Activated T-helper 1 cell treated with anti-CD3 and anti-CD28 coated beads, Interleukin-12 subunit alpha, Interleukin-12 subunit beta, Interleukin-2, Interleukin-4 antibody, amounts not matched to agents 30 ng/mL and 10 ng/mL and 1 ng/mL, durations not matched to agents 14 hours and 24 hours and 36 hours (primary cell): ENCODE measurements at regions of chr6 and their contacts with region 1.

Region 1: DNA sequence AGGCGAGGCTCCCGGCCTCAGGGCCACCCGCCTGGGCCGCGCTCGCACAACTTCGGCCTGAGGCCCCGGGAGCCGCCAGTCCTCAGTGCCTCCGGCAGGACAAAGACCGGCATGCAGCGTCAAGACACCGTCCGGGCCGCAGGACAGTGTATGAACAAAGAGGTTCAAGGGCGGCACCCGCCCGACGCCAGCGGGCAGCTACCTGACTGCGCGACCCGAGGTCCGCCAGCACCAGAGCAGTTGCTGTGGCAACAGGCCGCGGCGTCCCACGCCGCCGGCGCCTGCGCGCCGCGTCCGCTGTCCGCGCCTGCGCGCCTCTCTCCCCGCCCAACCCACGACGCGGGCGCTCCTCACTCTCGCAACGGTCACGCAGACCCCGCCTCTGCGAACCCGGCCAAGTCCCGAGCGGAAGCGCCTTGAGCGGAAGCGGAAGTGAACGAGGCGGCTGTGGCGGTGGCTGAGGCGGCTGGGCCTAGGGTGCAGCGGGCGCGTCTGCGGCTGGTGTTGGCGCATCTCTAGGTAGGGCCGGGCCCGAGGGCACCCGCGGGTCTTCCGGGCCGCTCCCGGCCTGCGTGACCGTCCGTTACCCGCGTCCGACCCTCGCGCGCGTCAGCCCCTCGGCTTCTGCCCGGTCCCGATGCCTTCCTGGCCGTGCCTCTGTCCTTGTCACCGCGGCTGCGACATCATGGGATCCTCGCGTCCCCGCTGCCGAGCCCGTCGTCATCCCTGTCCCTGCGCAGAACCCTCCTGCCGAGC is at the start of gene FAM120B:
- DNase-seq: peak; percentile 97
- H3K4me3 Mint-ChIP-seq: peak within 1 kb of the TSS; percentile 95
- H3K27ac Mint-ChIP-seq: peak within 1 kb of the TSS; percentile 92
- H3K4me1 Mint-ChIP-seq: peaks cover 26% of the 10 kb centered on the region
- H3K27me3 Mint-ChIP-seq: peaks cover 32% of the 10 kb centered on the region
- total RNA-seq, gene FAM120B: 18.4 TPM in 2 replicates

Region 2: DNA sequence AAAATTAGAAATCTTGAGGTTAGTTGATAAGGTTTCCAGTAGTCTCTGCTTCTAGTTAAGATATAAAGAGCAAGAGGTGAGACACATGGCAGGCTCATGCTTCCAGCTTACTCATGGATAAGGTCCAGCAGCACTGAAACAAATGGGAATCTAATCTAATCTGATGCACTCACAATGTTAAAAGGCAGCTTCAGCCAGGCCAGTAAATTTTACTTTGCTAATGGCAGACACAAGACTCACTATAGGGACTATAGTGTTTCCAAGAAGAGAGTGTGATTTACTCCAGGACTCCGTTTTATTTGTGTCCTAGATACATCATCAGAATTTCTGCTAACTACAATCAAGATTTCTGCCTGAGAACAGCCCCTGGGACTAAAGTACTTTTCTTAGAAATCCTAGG is 1540.8 kb before region 1 on chr6:
- intact Hi-C with region 1: no loop called
- DNase-seq: no peak
- H3K4me3 Mint-ChIP-seq: no peak overlapping the region
- H3K27ac Mint-ChIP-seq: no peak overlapping the region
- H3K4me1 Mint-ChIP-seq: no peaks in the 10 kb centered on the region
- H3K27me3 Mint-ChIP-seq: no peaks in the 10 kb centered on the region

Region 3: DNA sequence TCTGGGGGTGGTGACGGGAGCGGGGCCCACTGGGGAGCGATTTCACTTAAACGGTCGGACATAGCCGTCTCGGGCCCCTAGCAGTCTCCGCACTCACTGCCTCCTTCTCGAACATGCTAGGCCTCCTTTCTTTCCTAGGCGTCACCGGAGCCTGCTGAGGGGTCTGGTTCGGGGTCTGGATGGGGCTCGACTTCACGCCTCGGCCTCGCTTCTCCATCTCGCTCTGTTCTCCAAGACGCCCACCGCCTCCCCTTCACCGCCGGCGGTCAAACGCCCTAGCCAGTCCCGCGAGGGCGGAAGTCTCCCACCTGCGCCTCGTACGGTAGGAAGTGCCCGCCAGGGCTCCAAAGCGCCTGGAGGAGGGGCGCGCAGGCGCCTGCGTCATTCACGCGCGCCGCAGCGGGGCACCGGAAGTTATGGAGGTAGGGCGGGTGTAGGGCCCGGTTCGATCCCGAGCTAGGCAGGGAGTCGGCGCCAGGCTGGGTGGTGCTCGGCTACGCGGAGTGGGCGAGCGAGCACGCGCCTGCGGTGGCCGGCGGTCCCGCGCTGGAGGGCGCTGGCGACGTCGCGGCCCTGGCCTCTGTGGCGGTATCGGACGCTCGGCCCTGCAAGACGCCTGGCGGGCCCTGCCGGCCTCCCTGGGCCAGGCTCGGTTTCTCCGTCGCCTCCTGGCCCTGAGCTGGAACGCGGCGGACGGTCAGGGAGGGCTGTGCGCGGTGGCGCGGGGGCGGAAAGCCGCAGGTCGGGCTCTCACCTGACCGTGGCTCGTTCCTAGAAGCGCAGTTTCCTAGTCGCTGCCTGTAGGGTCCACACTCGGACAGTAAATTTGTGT is 555.0 kb before region 1 on chr6 and contains the starts of genes DYNLT2 and ERMARD:
- intact Hi-C with region 1: loop called (anchors 2 kb)
- DNase-seq: peak; percentile 93
- H3K4me3 Mint-ChIP-seq: peak within 1 kb of the TSS; percentile 99
- H3K27ac Mint-ChIP-seq: peak within 1 kb of the TSS; percentile 99
- H3K4me1 Mint-ChIP-seq: peaks cover 28% of the 10 kb centered on the region
- H3K27me3 Mint-ChIP-seq: peaks cover 4% of the 10 kb centered on the region
- total RNA-seq, gene DYNLT2: 2.2 and 2.6 TPM in 2 replicates
- total RNA-seq, gene ERMARD: 26.9 and 29.2 TPM in 2 replicates

Region 4: DNA sequence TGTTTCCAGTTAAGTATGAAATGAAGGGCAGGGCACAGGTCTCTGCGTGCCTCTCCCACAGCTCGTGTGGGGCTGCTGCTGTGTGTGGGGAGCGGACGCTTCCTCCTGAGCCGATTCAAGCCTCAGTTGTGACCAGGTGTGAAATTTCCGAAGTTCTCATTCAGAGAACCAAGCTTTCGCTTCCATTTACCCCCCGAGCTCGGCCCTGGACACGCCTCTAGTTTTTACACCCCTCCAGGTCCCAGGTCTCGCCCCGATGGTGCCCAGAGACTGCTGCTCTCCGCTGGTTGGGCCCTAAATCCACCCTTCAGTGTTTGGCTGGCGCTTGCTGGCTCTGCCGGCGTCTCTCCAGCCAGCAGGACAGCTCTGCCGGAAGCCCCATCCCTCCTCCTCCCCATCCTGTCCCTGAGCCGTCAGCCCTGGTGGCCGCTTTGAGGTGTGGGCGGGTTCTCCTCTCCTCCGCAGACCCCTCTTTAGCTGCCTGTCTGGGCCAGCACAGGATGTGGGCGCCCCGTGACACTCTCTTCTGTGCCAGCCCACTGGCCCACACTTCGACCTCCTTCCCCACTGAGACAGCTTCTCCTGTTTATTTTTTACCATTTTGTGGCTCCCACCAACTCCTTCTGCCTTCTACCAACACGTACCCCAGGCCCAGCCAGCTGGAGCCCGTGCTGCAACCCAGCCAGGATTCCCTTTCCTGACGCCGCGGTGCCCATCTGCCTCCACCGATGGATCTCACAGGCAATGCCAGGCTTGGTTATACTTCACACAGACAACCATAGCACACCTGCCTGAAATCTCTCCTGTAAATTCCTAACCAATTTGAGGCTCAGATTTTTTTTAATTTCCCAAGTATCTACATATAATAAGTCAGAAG is 158.4 kb before region 1 on chr6:
- intact Hi-C with region 1: loop called (anchors 5 kb)
- DNase-seq: peak; percentile 22
- H3K4me3 Mint-ChIP-seq: peak overlapping the region; percentile 38
- H3K27ac Mint-ChIP-seq: peak overlapping the region; percentile 59
- H3K4me1 Mint-ChIP-seq: peaks cover 17% of the 10 kb centered on the region
- H3K27me3 Mint-ChIP-seq: peaks cover 23% of the 10 kb centered on the region

Region 5: GRCh38 chr6:170347091-170347490 is 40.6 kb after region 1 on chr6:
- intact Hi-C with region 1: loop called (anchors 2 kb)
- DNase-seq: no peak
- H3K4me3 Mint-ChIP-seq: peak overlapping the region; percentile 60
- H3K27ac Mint-ChIP-seq: peak overlapping the region; percentile 78
- H3K4me1 Mint-ChIP-seq: peaks cover 35% of the 10 kb centered on the region
- H3K27me3 Mint-ChIP-seq: no peaks in the 10 kb centered on the region

Region 6: GRCh38 chr6:170554013-170554795 is 247.7 kb after region 1 on chr6 and contains the start of gene TBP:
- intact Hi-C with region 1: loop called (anchors 1 kb)
- DNase-seq: peak; percentile 96
- H3K4me3 Mint-ChIP-seq: no peak within 1 kb of the TSS
- H3K27ac Mint-ChIP-seq: no peak within 1 kb of the TSS
- H3K4me1 Mint-ChIP-seq: peaks cover 34% of the 10 kb centered on the region
- H3K27me3 Mint-ChIP-seq: no peaks in the 10 kb centered on the region
- total RNA-seq, gene TBP: 27.8 and 29.6 TPM in 2 replicates